ENCODE measurements at regions of chr10 and their contacts with region 1.

Region 1: GRCh38 chr10:102859911-102860310 is 5.9 kb downstream of the BORCS7 start:
- DNase-seq: no peak
- H3K4me3 ChIP-seq: no peak overlapping the region
- H3K27ac ChIP-seq: no peak overlapping the region
- H3K4me1 ChIP-seq: peaks cover 3% of the 10 kb centered on the region
- H3K27me3 ChIP-seq: no peaks in the 10 kb centered on the region
- CTCF ChIP-seq: no peak
- POLR2A ChIP-seq: no peak

Region 2: DNA sequence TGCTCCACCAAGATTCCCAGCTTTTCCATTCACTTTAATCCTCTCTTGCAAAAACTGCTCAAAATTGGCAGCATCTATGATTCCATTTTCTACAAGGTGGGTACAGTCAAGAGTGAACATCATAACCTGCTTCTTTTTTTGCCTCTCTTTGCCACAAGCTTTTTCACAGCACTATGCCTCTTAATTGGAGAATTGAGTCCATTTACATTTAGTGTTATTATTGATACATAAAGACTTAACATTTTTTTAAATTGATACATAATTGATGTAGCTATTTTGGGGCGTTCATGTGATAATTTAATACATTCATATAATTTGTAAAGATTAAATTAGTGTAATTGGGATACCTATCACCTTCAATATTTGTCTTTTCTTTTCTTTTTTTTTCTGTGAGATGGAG is 28.1 kb after region 1 on chr10:
- CTCF ChIA-PET with region 1: no interaction called
- POLR2A ChIA-PET with region 1: no interaction called
- dilution Hi-C with region 1: no loop called
- intact Hi-C with region 1: loop called (anchors 2 kb)
- DNase-seq: no peak
- H3K4me3 ChIP-seq: no peak overlapping the region
- H3K27ac ChIP-seq: no peak overlapping the region
- H3K4me1 ChIP-seq: no peaks in the 10 kb centered on the region
- H3K27me3 ChIP-seq: no peaks in the 10 kb centered on the region
- CTCF ChIP-seq: no peak
- POLR2A ChIP-seq: no peak

Region 3: DNA sequence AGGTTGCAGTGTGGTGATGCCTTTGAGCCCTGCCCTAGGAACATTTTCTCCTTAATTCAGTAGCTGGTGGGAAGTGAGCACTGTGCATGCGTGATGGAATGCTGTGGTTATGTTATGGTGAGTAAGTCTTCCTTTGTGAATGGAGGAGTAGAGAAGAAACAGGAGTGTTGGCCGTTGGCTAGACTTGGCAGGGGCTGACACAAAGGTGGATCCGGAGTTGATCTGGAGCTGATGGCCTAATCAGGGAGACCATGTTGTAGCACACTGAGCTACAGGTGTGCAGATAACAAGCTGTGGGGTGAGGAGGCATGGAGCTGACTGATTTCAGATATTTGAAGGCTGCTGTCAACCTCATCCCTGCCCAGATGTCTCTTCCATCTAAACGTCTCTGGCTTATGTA is 180.5 kb after region 1 on chr10:
- CTCF ChIA-PET with region 1: no interaction called
- POLR2A ChIA-PET with region 1: no interaction called
- dilution Hi-C with region 1: no loop called
- intact Hi-C with region 1: no loop called
- DNase-seq: no peak
- H3K4me3 ChIP-seq: no peak overlapping the region
- H3K27ac ChIP-seq: no peak overlapping the region
- H3K4me1 ChIP-seq: no peaks in the 10 kb centered on the region
- H3K27me3 ChIP-seq: peaks cover 0 to 11% of the 10 kb centered on the region in 2 experiments
- CTCF ChIP-seq: no peak
- POLR2A ChIP-seq: no peak